IMR-90 (cell line): ENCODE measurements at regions of chr1 and their contacts with region 1.

Region 1: GRCh38 chr1:153990468-153991150 is at the start of gene RPS27:
- DNase-seq: peak; percentile 99
- ATAC-seq: peak; percentile 55
- H3K4me3 ChIP-seq: peak within 1 kb of the TSS; percentile 57
- H3K27ac ChIP-seq: peak within 1 kb of the TSS; percentile 83
- H3K4me1 ChIP-seq: 0 out of 2 replicates have a peak, but pooled peaks cover 2% of the 10 kb centered on the region
- H3K27me3 ChIP-seq: no peaks in the 10 kb centered on the region
- CTCF ChIP-seq: no peak
- POLR2A ChIP-seq: peak; percentile 100
- RAD21 ChIP-seq: no peak
- total RNA-seq, gene RPS27: 320 and 1,119 TPM in 2 replicates

Region 2: GRCh38 chr1:152786077-152786476 is 1204.5 kb before region 1 on chr1 and contains the start of gene LCE1E:
- CTCF ChIA-PET with region 1: no interaction called
- POLR2A ChIA-PET with region 1: no interaction called
- dilution Hi-C with region 1: no loop called
- in situ Hi-C with region 1: no loop called
- intact Hi-C with region 1: no loop called
- DNase-seq: no peak
- ATAC-seq: no peak
- H3K4me3 ChIP-seq: no peak within 1 kb of the TSS
- H3K27ac ChIP-seq: no peak within 1 kb of the TSS
- H3K4me1 ChIP-seq: no peaks in the 10 kb centered on the region
- H3K27me3 ChIP-seq: no peaks in the 10 kb centered on the region
- CTCF ChIP-seq: no peak
- POLR2A ChIP-seq: no peak
- RAD21 ChIP-seq: no peak
- total RNA-seq, gene LCE1E: not detected in 2 replicates

Region 3: GRCh38 chr1:153122831-153123421 is 867.7 kb before region 1 on chr1:
- CTCF ChIA-PET with region 1: no interaction called
- POLR2A ChIA-PET with region 1: no interaction called
- dilution Hi-C with region 1: no loop called
- in situ Hi-C with region 1: no loop called
- intact Hi-C with region 1: no loop called
- DNase-seq: no peak
- ATAC-seq: no peak
- H3K4me3 ChIP-seq: no peak overlapping the region
- H3K27ac ChIP-seq: no peak overlapping the region
- H3K4me1 ChIP-seq: no peaks in the 10 kb centered on the region
- H3K27me3 ChIP-seq: no peaks in the 10 kb centered on the region
- CTCF ChIP-seq: no peak
- POLR2A ChIP-seq: no peak
- RAD21 ChIP-seq: no peak

Region 4: GRCh38 chr1:153677718-153678505 is 312.7 kb before region 1 on chr1:
- CTCF ChIA-PET with region 1: no interaction called
- POLR2A ChIA-PET with region 1: no interaction called
- dilution Hi-C with region 1: no loop called
- in situ Hi-C with region 1: no loop called
- intact Hi-C with region 1: loop called (anchors 1 kb)
- DNase-seq: peak; percentile 45
- ATAC-seq: peak; percentile 79
- H3K4me3 ChIP-seq: 0 out of 2 replicates have a peak overlapping the region, but pooled peaks have one; percentile 38
- H3K27ac ChIP-seq: no peak overlapping the region
- H3K4me1 ChIP-seq: peaks cover 7% of the 10 kb centered on the region; the same call in 1 of the 2 replicates
- H3K27me3 ChIP-seq: peaks cover 47% of the 10 kb centered on the region
- CTCF ChIP-seq: peak; percentile 87
- POLR2A ChIP-seq: no peak
- RAD21 ChIP-seq: peak; percentile 85

Region 5: DNA sequence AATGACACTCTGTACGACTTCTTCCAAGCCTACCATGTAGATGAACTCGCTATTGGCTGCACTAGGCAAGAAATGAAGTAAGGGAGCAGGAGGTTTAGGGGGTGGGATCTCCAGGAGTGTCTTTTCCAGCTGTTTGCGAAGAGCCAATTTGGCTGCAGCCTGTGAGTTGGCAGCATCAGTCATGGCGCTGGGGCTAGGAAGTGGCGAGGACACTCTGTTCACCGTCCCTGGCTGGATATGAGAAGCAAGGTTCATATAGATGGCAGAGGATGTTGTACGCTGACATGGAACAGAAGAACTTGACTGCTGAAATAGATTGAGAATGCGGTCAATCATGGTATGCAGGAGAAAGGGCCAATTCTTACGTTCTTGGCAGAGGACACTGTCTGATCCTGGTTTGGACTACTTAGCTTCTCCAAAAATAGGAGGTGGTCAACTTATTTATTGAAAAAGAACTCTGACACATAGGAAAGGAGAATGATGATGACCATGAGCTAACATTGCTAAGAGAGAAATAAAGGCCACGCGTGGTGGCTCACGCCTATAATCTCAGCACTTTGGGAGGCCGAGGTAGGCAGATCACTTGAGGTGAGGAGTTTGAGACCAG is 174.2 kb before region 1 on chr1:
- CTCF ChIA-PET with region 1: interaction called, 9 read pairs
- POLR2A ChIA-PET with region 1: no interaction called
- dilution Hi-C with region 1: no loop called
- in situ Hi-C with region 1: no loop called
- intact Hi-C with region 1: loop called (anchors 1 kb)
- DNase-seq: no peak
- ATAC-seq: no peak
- H3K4me3 ChIP-seq: no peak overlapping the region
- H3K27ac ChIP-seq: no peak overlapping the region
- H3K4me1 ChIP-seq: no peaks in the 10 kb centered on the region
- H3K27me3 ChIP-seq: no peaks in the 10 kb centered on the region
- CTCF ChIP-seq: no peak
- POLR2A ChIP-seq: no peak
- RAD21 ChIP-seq: no peak

Region 6: GRCh38 chr1:153967082-153968000 is 23.3 kb before region 1 on chr1 and contains the start of gene CREB3L4:
- CTCF ChIA-PET with region 1: interaction called, 8 read pairs
- POLR2A ChIA-PET with region 1: interaction called, 5 read pairs
- dilution Hi-C with region 1: no loop called
- in situ Hi-C with region 1: no loop called
- intact Hi-C with region 1: loop called (anchors 2 kb)
- DNase-seq: peak; percentile 98
- ATAC-seq: peak; percentile 83
- H3K4me3 ChIP-seq: peak within 1 kb of the TSS; percentile 59
- H3K27ac ChIP-seq: peak within 1 kb of the TSS; percentile 77
- H3K4me1 ChIP-seq: peaks cover 3% of the 10 kb centered on the region; the same call in 1 of the 2 replicates
- H3K27me3 ChIP-seq: no peaks in the 10 kb centered on the region
- CTCF ChIP-seq: peak; percentile 60
- POLR2A ChIP-seq: peak; percentile 66; the same call in 1 of the 2 replicates
- RAD21 ChIP-seq: peak; percentile 19; the same call in 1 of the 2 replicates
- total RNA-seq, gene CREB3L4: 4.4 and 6.5 TPM in 2 replicates

Region 7: GRCh38 chr1:154157520-154158306 is 167.1 kb after region 1 on chr1:
- CTCF ChIA-PET with region 1: no interaction called
- POLR2A ChIA-PET with region 1: interaction called, 3 read pairs
- dilution Hi-C with region 1: no loop called
- in situ Hi-C with region 1: no loop called
- intact Hi-C with region 1: loop called (anchors 2 kb)
- DNase-seq: peak; percentile 31
- ATAC-seq: peak; percentile 7; the same call in 1 of the 2 replicates
- H3K4me3 ChIP-seq: no peak overlapping the region
- H3K27ac ChIP-seq: peak overlapping the region; percentile 57; the same call in 1 of the 2 replicates
- H3K4me1 ChIP-seq: peaks cover 8% of the 10 kb centered on the region
- H3K27me3 ChIP-seq: no peaks in the 10 kb centered on the region
- CTCF ChIP-seq: no peak
- POLR2A ChIP-seq: no peak
- RAD21 ChIP-seq: no peak